Heart left ventricle (tissue), 16 donors: ENCODE measurements at regions of chr20 and their contacts with region 1.

Region 1: DNA sequence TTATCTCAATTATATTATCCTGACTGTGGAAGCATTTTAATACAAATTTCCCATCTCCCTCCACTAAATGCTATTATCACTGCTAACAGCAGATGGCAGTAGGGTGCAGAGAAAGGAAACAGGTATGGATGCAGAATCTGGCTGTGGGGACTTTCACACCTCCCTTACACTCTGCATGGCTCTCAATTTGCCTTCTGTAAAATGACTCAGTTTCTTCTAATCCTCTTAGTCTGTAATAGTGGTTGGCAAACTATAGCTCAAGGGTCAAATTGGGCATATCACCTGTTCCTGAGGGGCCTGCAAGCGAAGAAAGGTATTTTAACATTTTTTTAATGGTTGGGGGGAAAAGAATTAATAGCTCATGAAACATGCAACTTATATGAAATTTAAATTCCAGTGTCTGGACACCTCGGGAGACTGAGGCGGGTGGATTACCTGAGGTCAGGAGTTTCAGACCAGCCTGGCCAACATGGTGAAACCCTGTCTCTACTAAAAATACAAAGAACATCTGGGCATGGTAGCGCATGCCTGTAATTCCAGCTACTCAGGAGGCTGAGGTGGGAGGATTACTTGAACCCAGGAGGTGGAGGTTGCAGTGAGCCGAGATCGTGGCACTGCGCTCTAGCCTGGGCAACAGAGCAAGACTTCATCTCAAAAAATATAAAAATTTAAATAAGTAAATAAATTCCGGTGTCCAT is 83.5 kb downstream of the ZMYND8 start:
- DNase-seq: peak in 2 of 5 donors; percentile 49 to 62
- ATAC-seq: peak; percentile 45 to 75 (median 70)
- H3K4me3 ChIP-seq: no peak overlapping the region
- H3K27ac ChIP-seq: peak overlapping the region in 9 of 12 donors; percentile 14 to 88 (median 72)
- H3K4me1 ChIP-seq: peaks cover 13 to 52% (median 41%) of the 10 kb centered on the region in 12 donors
- H3K27me3 ChIP-seq: no peaks in the 10 kb centered on the region
- CTCF ChIP-seq: peak; percentile 79 to 94 (median 90)
- POLR2A ChIP-seq: no peak

Region 2: GRCh38 chr20:47196091-47197081 is 76.7 kb before region 1 on chr20:
- intact Hi-C with region 1: loop called in 4 of 10 experiments (anchors 2 to 5 kb)
- DNase-seq: peak; percentile 60 to 84 (median 66)
- ATAC-seq: peak; percentile 45 to 86 (median 83)
- H3K4me3 ChIP-seq: peak overlapping the region in 1 of 12 donors; percentile 5
- H3K27ac ChIP-seq: peak overlapping the region in 1 of 12 donors; percentile 17
- H3K4me1 ChIP-seq: peaks cover 0 to 19% (median 7%) of the 10 kb centered on the region in 12 donors
- H3K27me3 ChIP-seq: no peaks in the 10 kb centered on the region
- CTCF ChIP-seq: peak; percentile 91 to 98 (median 95)
- POLR2A ChIP-seq: no peak

Region 3: DNA sequence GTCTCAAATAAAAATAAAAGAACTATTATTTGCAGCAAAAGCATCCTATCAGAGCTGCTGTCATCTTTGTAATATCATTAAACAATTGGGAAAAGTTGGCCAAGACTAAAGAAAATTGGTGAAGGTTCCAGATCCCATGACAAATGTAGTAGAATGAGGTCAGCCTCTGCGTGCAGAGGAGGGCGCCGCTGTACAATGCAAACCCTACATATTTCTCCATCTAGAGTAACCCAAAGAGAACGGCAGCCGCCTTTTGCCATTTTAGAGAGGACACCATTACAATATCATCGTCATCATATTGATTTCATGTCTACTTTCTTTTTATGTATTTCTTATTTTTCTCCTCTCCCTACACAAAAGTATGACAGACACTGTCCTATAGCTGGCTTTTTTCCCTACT is 23.9 kb after region 1 on chr20:
- intact Hi-C with region 1: loop called in 1 of 10 experiments (anchors 2 kb)
- DNase-seq: no peak
- ATAC-seq: no peak
- H3K4me3 ChIP-seq: no peak overlapping the region
- H3K27ac ChIP-seq: peak overlapping the region in 1 of 12 donors; percentile 19
- H3K4me1 ChIP-seq: peaks cover 0 to 23% (median 6%) of the 10 kb centered on the region in 12 donors
- H3K27me3 ChIP-seq: no peaks in the 10 kb centered on the region
- CTCF ChIP-seq: peak in 6 of 12 donors; percentile 7 to 37 (median 22)
- POLR2A ChIP-seq: no peak

Region 4: GRCh38 chr20:47317127-47317895 is 44.3 kb after region 1 on chr20:
- intact Hi-C with region 1: loop called in 4 of 10 experiments (anchors 5 kb)
- DNase-seq: peak; percentile 78 to 94 (median 85)
- ATAC-seq: peak; percentile 71 to 86 (median 78)
- H3K4me3 ChIP-seq: peak overlapping the region in 3 of 12 donors; percentile 17 to 43 (median 32)
- H3K27ac ChIP-seq: peak overlapping the region; percentile 95 to 100 (median 98)
- H3K4me1 ChIP-seq: peaks cover 13 to 85% (median 71%) of the 10 kb centered on the region in 12 donors
- H3K27me3 ChIP-seq: no peaks in the 10 kb centered on the region
- CTCF ChIP-seq: no peak
- POLR2A ChIP-seq: peak in 1 of 2 donors; percentile 76

Region 5: DNA sequence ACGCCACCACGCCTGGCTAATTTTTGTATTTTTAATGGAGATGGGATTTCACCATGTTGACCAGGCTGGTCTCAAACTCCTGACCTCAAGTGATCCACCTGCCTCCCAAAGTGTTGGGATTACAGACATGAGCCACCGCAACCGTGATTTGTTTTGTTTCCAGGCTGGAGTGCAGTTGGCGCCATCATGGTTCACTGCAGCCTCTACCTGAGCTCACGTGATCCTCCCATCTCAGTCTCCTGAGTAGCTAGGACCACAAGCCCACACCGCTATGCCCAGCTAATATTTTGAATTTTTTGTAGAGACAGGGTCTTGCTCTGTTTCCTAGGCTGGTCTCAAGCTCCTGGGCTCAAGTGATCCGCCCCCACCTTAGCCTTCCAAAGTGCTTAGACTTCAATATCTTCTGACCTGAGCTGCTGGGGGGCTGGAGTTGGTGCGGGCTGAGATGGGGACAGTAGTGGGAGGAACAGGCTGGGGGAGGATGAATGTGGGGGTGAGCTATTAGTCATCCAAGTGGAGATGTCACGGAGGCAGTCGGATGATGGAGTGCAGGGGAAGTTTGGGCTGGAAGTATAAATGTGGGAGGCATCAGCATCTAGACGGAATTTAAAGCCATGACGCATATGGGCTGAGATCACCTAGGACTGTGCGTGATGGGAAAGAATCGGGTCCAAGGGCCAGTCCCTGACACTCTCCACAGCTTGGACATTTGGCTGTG is 106.5 kb after region 1 on chr20:
- intact Hi-C with region 1: loop called (anchors 1 to 2 kb)
- DNase-seq: no peak
- ATAC-seq: no peak
- H3K4me3 ChIP-seq: no peak overlapping the region
- H3K27ac ChIP-seq: no peak overlapping the region
- H3K4me1 ChIP-seq: peaks cover 0 to 20% (median 11%) of the 10 kb centered on the region in 12 donors
- H3K27me3 ChIP-seq: no peaks in the 10 kb centered on the region
- CTCF ChIP-seq: no peak
- POLR2A ChIP-seq: no peak

Region 6: DNA sequence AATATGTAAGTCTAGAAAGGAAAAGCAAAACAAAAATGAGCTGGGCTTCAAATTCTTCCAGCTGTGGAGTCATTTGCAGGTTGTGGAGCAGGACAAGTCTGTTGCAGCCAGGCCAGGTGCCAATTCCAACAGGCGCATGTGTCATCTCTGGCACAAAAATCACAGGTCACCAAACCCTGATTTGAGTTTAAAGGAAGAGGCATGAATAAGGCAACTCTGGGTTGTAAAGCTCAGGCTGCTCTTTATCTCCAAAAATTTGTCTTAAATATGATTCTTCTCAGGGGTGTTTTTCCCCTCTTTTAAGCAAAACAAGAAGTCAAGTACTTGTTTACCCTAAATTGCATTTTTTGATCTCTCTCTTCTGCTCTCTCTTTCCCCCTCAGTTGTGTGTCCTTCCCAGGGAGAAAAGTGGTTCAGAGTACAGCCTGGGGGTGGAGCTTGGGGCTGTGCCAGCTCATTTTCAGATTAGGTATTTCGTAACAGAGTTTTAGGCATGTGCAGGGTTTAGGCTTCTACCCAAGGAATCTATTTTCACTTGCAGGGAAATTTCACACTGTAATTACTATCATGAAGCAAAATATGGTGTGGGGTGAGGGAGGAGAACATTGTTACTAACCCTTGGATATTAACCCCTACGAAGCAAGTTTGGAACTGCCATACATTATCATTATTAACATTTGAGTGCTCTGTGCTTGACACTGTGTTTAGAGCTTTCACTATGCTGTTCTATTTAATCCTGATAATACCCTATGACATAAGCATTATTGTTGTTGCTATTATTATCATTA is 220.3 kb after region 1 on chr20:
- intact Hi-C with region 1: loop called in 4 of 10 experiments (anchors 5 to 10 kb)
- DNase-seq: peak; percentile 87 to 92 (median 87)
- ATAC-seq: peak; percentile 94 to 95 (median 94)
- H3K4me3 ChIP-seq: peak overlapping the region in 3 of 12 donors; percentile 3 to 24 (median 23)
- H3K27ac ChIP-seq: peak overlapping the region; percentile 75 to 89 (median 82)
- H3K4me1 ChIP-seq: peaks cover 0 to 52% (median 21%) of the 10 kb centered on the region in 12 donors
- H3K27me3 ChIP-seq: no peaks in the 10 kb centered on the region
- CTCF ChIP-seq: no peak
- POLR2A ChIP-seq: no peak

Region 7: DNA sequence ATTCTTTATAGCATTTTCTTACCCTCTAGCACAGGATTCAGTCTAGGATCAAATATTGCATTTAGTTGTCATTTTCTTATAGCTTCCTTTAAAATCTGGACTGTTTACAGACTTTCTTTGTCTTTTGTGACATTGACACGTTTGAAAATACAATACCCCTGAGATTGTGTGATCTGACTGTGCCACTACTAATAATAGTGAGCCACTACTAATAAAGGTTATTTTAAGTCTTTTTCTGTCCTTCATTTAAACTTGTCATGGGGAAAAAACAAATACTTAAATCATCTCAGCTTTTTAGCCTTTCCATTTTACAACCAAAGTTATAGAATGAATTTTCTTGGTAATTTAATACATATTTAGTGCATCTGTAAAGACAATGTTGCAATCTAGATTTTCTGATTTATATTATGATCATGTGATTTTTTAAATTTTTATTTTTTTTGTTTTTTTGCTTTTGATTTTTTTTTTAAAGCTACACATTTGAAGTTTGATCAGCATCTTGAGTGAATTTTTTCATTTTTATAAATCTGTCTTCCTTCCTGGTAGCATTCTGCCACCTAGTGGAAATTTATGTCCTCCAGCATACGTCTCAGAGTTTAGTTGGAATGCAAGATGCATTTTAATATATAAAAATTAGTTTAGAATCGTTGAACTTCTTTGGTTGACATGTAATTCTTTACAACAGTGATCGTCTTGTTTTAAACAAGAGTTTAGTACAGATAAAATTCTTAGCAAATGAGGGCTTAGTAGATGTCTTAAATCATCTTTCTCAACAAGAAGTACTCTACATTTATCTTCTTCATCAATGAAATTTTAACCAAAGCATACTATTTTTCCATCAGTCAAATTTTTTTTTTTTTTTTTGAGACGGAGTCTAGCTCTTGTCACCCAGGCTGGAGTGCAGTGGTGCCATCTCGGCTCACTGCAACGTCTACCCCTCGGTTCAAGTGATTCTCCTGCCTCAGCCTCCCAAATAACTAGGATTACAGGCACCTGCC is 348.1 kb after region 1 on chr20:
- intact Hi-C with region 1: loop called (anchors 5 to 10 kb)
- DNase-seq: no peak
- ATAC-seq: peak in 2 of 4 donors; percentile 53 to 60
- H3K4me3 ChIP-seq: no peak overlapping the region
- H3K27ac ChIP-seq: peak overlapping the region in 5 of 12 donors; percentile 3 to 18 (median 8)
- H3K4me1 ChIP-seq: peaks cover 0 to 24% (median 11%) of the 10 kb centered on the region in 12 donors
- H3K27me3 ChIP-seq: no peaks in the 10 kb centered on the region
- CTCF ChIP-seq: peak; percentile 74 to 96 (median 87)
- POLR2A ChIP-seq: no peak